ENCODE measurements at regions of chr7 and their contacts with region 1.

Region 1: GRCh38 chr7:1969459-1970284 is 263.1 kb downstream of the MAD1L1 start:
- DNase-seq: no peak
- H3K4me3 ChIP-seq: no peak overlapping the region
- CTCF ChIP-seq: no peak

Region 2: DNA sequence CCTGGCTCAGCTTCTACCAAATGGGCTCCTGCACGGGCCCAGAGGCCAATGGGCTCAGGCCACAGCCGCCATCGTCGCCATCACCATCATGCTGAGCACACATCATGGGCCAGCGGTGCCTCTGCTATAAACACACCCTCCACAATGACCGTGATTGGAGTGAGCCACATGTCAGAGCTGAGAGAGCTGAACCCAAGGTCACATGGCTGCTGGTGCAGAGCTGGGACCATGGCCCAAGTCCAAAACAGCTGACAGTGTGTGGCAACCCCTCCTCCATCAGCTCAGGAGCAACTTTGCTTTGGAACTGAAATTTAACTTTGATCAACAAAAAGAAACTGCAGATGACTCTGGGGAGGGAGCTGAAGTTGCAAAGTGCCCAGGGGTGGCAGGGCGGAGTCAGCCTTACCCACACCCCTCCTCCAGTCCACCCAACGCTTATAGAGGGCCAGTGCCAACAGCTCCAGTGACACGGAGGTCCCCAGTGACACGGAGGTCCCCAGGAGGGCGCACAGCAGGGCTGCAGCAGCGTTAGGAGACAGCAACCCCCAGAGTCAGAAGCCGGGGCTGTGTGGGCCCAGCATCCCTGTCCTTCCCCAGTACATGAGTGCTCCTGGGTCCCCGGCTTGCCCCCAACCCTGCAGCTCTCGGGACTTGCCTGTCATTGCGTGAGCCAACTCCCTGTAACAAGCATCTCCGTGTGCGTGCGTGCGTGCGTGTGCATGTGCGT is 50.0 kb before region 1 on chr7:
- in situ Hi-C with region 1: loop called (anchors 5 kb)
- DNase-seq: no peak
- H3K4me3 ChIP-seq: no peak overlapping the region
- CTCF ChIP-seq: no peak